Breast epithelium (tissue), 4 donors: ENCODE measurements at regions of chr3 and their contacts with region 1.

Region 1: GRCh38 chr3:49120438-49121131 is at the start of gene USP19:
- DNase-seq: peak; percentile 91 to 92
- H3K4me3 ChIP-seq: peak within 1 kb of the TSS; percentile 79 to 95 (median 91)
- H3K27ac ChIP-seq: peak within 1 kb of the TSS; percentile 96
- H3K4me1 ChIP-seq: peaks cover 8 to 11% of the 10 kb centered on the region in 2 donors
- H3K27me3 ChIP-seq: no peaks in the 10 kb centered on the region
- CTCF ChIP-seq: no peak
- POLR2A ChIP-seq: peak; percentile 73
- total RNA-seq, gene USP19: 49.2 to 57.2 (median 56.2) TPM

Region 2: GRCh38 chr3:49104483-49105291 is 15.9 kb before region 1 on chr3 and contains the start of gene QARS1:
- intact Hi-C with region 1: loop called (anchors 1 kb)
- DNase-seq: peak; percentile 93 to 94
- H3K4me3 ChIP-seq: peak within 1 kb of the TSS; percentile 78 to 98 (median 94)
- H3K27ac ChIP-seq: peak within 1 kb of the TSS; percentile 74 to 85
- H3K4me1 ChIP-seq: peaks cover 0 to 10% of the 10 kb centered on the region in 2 donors
- H3K27me3 ChIP-seq: no peaks in the 10 kb centered on the region
- CTCF ChIP-seq: no peak
- POLR2A ChIP-seq: no peak
- total RNA-seq, gene QARS1: 233 to 268 (median 252) TPM

Region 3: GRCh38 chr3:49181351-49181750 is 60.8 kb after region 1 on chr3:
- intact Hi-C with region 1: no loop called
- DNase-seq: no peak
- H3K4me3 ChIP-seq: no peak overlapping the region
- H3K27ac ChIP-seq: no peak overlapping the region
- H3K4me1 ChIP-seq: no peaks in the 10 kb centered on the region
- H3K27me3 ChIP-seq: no peaks in the 10 kb centered on the region
- CTCF ChIP-seq: no peak
- POLR2A ChIP-seq: no peak

Region 4: DNA sequence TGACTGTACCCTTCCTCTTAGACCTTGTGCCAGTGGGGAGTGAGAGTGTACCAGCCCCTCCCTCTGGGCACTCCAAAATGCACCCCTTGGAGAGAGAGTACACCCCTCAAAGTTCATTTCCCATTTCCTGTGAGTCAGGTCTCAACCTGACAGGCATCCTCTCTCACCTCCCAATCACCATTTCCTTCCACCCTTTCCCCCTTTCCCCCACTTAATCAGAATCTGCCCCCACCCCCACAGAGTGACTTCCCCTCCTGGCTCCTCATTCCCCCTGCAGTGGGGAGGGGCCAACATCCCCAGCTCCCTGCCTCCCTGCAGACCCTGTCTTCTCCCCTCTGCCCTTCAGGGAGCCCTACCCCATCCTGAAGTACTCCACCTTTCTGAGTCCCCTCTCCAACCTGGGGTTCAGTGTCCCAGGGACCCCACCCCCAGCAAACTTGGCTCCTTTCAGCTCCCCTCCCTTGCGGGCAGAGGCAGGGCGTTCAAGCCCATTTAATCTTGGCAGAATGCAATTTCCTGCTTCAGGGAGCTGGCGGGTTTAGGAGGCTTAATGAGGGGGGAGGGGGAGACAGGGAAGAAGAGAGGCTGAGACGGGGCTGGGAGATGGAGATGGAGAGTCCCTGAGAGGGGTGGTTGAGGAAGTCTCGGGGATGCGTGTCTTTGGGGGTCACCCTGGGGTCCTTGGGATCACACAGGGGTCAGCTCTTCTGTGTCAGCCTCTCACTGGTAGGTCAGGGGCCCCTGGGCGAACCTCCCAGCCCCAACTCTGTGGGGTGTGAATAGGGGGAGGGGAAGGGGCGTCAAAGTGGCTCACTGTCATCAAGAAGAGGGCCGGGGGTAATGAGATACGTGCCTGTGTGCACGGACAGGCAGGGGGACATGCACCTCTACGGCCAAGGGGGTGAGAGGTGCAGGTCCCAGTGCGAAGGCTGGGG is 1017.9 kb after region 1 on chr3:
- intact Hi-C with region 1: no loop called
- DNase-seq: no peak
- H3K4me3 ChIP-seq: no peak overlapping the region
- H3K27ac ChIP-seq: no peak overlapping the region
- H3K4me1 ChIP-seq: peaks cover 4 to 15% of the 10 kb centered on the region in 2 donors
- H3K27me3 ChIP-seq: no peaks in the 10 kb centered on the region
- CTCF ChIP-seq: no peak
- POLR2A ChIP-seq: no peak